Head of caudate nucleus (tissue), 42 donors: ENCODE measurements at regions of chr1 and their contacts with region 1.

Region 1: GRCh38 chr1:11645670-11646265 is 8.5 kb downstream of the FBXO2 start:
- DNase-seq: peak; percentile 78 to 97 (median 92)

Region 2: DNA sequence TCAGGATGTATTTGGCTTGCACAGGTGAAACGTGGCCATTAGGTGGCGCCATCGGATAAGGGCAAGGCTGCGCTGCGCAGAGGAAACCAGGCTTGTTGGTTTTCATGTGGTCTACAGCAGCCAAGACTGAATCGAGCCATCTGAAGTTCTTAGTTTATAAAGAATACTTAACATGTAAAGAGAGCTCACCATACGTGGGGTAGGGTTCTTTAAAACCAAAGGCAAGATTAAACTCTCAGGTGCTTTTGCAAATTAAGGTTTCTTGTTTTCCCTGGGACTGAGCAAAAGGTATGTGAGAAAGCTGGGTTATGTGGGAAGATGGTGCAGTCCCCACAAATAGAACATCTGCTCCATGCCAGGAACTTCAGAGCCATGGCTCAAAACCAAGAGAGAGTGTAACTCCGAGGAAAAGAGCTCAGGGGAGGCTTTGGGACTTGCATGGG is 608.0 kb before region 1 on chr1:
- intact Hi-C with region 1: loop called (anchors 5 kb)
- DNase-seq: peak; percentile 77 to 97 (median 92)

Region 3: DNA sequence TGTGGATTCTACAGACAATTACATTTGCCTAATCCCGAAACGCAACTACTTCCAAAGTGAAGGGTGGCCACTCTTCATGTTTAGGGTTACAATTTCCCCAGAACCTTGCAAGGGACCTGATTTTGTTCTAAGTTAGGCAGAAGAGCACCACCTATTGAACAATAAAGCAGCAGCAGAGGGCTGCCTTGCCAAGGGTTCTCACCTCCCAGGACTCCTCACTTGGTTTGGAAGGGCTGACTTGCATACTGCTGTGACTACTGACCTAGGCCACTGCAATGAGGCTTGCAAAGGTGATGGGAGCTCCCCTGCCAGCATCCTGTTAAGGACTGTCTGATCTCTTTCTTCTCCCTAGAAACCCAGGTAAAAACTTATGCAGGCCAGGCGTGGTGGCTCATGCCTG is 397.6 kb before region 1 on chr1:
- intact Hi-C with region 1: loop called (anchors 5 kb)
- DNase-seq: no peak

Region 4: DNA sequence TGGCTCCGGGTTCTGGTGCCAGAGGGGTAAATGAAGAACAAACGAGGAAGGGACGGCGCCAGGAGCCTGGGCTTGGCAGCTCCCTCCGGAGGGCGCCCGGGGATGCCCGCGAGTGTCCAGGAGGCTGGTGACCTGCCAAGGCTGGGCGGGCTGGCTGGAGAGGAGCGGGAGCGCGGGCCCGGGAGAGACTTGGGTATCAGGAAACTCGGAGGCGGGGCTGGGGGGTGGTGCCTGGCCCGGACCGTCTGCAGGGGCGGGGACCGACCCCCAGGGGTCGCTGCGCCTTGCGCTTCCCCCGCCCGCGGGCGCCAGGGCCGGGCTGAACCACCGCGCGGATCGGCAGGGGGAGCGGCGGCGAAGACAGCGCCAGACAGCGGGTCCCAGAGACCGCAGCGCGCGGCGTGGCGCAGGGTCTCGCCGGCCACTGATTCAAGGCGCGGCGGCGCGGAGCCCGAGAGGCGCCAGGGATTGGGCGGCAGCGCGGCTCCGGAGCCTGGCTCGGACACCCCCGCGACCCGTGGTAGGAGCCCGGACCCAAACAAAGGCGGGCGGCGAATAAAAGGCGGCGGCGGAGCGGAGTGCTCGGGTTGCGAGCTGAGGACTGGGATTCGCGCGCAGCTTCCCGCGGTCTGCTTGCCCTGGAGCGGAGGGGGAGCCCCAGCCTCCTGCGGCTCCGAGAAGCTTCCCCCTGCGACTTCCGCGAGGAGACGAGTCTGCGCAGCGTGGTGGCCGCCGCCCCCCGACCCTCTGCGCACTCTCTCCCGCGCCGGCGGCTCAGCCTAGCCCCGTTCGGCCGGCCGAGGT is 167.0 kb before region 1 on chr1 and contains the start of gene DISP3:
- intact Hi-C with region 1: loop called (anchors 10 kb)
- DNase-seq: peak; percentile 65 to 96 (median 90)

Region 5: GRCh38 chr1:11719313-11720032 is 73.7 kb after region 1 on chr1:
- intact Hi-C with region 1: loop called (anchors 5 kb)
- DNase-seq: peak; percentile 77 to 96 (median 90)

Region 6: GRCh38 chr1:11805447-11806306 is 159.9 kb after region 1 on chr1 and contains the starts of genes CLCN6 and MTHFR:
- intact Hi-C with region 1: loop called (anchors 10 kb)
- DNase-seq: peak; percentile 97 to 100 (median 99)